Dorsolateral prefrontal cortex (tissue), 120 donors: ENCODE measurements at regions of chr18 and their contacts with region 1.

Region 1: DNA sequence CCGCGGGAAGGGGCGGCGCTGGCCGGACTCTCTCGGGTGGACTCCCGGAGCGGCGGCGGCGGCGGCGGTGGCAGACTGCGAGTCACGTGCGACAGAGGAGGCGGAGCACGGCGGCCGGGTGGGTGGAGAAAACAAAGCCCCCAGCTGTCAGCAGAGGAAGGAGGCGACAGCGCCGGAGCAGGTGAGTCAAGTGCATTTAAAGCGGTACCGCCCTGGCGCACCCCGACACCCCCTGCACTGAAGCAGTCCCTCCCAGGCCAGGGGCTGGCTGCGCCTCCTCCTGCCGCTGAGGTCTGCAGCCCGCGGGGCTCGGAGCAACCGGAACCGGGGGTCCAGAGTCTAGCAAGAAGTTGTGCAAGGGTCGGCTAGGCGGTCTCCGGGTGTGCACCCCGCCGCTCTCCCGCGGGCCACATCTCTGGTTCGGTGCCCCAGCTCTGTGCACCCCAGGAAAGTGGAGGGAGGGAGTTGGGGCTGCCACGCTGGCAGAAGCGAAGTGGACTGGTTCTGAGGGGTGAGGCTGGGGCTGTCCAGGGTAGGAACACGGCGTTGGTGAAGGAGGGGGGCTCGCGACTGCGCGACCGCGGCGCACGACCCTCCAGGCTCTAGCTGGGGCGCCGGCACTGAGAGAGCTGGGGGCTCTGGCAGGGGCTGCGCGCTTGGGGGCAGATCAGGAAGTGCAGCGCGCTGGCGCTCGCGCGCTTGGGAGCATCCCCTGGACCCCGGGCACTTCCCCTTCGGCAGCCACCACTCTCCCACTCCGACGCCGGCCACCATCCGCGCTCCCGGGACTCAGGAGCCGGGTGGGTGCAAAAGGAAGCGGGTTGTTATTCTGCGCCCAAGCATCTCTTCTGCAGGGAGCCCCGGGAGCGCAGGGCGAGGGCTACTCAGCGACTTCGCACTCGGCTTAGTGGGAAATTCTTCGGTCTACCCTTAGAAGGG is 64.0 kb upstream of the MAPRE2 start:
- DNase-seq: peak; percentile 73 to 95 (median 86)
- H3K4me3 ChIP-seq: peak overlapping the region; percentile 73 to 100 (median 93)
- H3K27ac ChIP-seq: peak overlapping the region; percentile 65 to 99 (median 96)
- H3K27me3 ChIP-seq: no peaks in the 10 kb centered on the region
- CTCF ChIP-seq: peak in 22 of 56 donors; percentile 6 to 45 (median 26)

Region 2: DNA sequence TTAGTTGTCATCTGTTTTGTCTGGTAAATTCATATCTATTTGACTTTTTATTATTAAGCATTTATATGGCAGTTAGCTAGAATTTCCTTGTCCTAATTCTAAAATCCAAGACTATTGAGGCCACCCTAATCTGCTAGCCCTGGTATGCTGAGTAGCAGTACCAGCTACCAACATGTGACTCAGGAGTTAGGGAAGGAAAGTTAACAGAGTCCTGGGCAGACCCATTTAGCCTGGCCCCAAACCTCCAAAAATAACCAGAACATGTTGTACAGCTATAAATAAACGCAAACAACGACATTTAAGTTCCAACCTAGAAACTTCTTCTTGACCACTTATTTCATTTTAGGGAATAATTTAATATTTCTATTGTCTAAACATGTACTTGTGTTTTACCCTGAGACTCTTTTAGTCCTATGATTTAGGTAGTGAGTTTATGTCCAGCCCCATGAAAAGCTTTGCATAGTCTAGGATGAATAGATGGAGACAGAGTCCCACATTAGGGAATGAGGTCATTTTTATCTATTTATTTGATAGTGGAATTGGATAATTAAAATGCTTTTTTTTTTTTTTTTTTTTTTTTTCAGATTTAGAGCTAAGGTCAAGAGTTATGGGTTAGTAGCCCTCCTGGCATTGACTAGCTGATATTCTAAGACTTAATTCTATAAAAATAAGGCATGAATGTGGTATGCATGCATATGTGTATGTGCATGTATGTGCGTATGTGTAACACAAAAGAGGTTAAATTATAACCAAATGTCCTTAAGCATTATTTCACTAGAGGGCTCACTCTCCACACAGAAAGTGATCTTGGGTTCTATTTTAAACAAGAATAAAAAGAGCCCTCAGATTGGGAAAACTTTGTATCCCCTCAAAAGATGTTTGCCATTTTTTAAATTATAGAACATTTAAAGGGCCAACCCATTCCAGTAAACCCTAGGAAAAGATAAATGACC is 96.0 kb before region 1 on chr18:
- intact Hi-C with region 1: loop called (anchors 5 kb)
- DNase-seq: no peak
- H3K4me3 ChIP-seq: no peak overlapping the region
- H3K27ac ChIP-seq: peak overlapping the region in 44 of 59 donors; percentile 1 to 76 (median 34)
- H3K27me3 ChIP-seq: no peaks in the 10 kb centered on the region
- CTCF ChIP-seq: peak in 55 of 56 donors; percentile 27 to 76 (median 55)

Region 3: DNA sequence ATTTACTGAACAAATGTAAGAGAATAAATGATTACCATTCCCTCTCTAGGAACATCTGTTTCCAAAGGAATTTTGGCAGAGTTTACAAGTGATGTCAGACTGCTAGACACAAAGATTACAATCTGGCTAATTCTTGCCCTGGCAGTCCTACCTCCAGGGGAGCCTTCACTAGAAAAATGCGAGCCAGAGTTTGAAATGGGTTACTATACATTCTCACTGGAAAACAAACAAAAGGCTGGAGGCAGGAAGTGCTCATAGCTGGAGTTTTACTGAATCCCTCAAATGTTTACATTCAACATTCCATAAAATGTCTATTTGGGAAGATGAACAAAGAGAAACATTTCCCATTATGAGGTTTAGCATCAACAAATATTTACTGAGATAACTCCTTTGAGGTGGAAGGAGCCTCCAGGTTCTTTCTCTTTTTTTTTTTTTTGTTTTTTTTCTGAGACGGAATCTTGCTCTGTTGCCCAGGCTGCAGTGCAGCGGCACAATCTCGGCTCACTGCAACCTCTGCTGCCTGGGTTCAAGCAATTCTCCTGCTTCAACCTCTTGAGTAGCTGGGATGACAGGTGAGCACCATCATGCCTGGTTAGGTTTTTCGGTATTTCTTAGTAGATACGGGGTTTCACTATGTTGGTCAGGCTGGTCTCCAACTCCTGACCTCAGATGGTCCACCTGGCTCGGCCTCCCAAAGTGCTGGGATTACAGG is 65.0 kb before region 1 on chr18:
- intact Hi-C with region 1: loop called in 1 of 2 experiments (anchors 1 kb)
- DNase-seq: peak in 1 of 10 donors; percentile 22
- H3K4me3 ChIP-seq: peak overlapping the region in 1 of 59 donors; percentile 8
- H3K27ac ChIP-seq: peak overlapping the region in 11 of 59 donors; percentile 7 to 72 (median 43)
- H3K27me3 ChIP-seq: no peaks in the 10 kb centered on the region
- CTCF ChIP-seq: no peak

Region 4: GRCh38 chr18:35029770-35030169 is 52.6 kb after region 1 on chr18:
- intact Hi-C with region 1: loop called in 1 of 2 experiments (anchors 10 kb)
- DNase-seq: no peak
- H3K4me3 ChIP-seq: peak overlapping the region in 57 of 59 donors; percentile 0 to 61 (median 39)
- H3K27ac ChIP-seq: peak overlapping the region in 40 of 59 donors; percentile 2 to 82 (median 48)
- H3K27me3 ChIP-seq: no peaks in the 10 kb centered on the region
- CTCF ChIP-seq: peak in 15 of 56 donors; percentile 8 to 31 (median 13)

Region 5: GRCh38 chr18:35040988-35041814 is 64.0 kb after region 1 on chr18 and contains the start of gene MAPRE2:
- intact Hi-C with region 1: loop called (anchors 2 to 10 kb)
- DNase-seq: peak; percentile 99 to 100 (median 99)
- H3K4me3 ChIP-seq: peak within 1 kb of the TSS; percentile 57 to 99 (median 88)
- H3K27ac ChIP-seq: peak within 1 kb of the TSS; percentile 69 to 98 (median 94)
- H3K27me3 ChIP-seq: no peaks in the 10 kb centered on the region
- CTCF ChIP-seq: peak in 9 of 56 donors; percentile 8 to 36 (median 14)
- total RNA-seq, gene MAPRE2: 105 to 278 (median 202) TPM